ENCODE measurements at regions of chrX and their contacts with region 1.

Region 1: GRCh38 chrX:102659790-102660757 is 8.8 kb downstream of the GPRASP1 start:
- DNase-seq: peak; percentile 69
- CTCF ChIP-seq: no peak

Region 2: GRCh38 chrX:101986586-101986985 is 673.5 kb before region 1 on chrX:
- in situ Hi-C with region 1: no loop called
- DNase-seq: no peak
- CTCF ChIP-seq: no peak

Region 3: GRCh38 chrX:102720237-102721168 is 60.4 kb after region 1 on chrX and contains the start of gene GPRASP3:
- in situ Hi-C with region 1: loop called (anchors 10 kb)
- DNase-seq: peak; percentile 52
- CTCF ChIP-seq: no peak